PC-9 (cell line): ENCODE measurements at regions of chr5 and their contacts with region 1.

Region 1: DNA sequence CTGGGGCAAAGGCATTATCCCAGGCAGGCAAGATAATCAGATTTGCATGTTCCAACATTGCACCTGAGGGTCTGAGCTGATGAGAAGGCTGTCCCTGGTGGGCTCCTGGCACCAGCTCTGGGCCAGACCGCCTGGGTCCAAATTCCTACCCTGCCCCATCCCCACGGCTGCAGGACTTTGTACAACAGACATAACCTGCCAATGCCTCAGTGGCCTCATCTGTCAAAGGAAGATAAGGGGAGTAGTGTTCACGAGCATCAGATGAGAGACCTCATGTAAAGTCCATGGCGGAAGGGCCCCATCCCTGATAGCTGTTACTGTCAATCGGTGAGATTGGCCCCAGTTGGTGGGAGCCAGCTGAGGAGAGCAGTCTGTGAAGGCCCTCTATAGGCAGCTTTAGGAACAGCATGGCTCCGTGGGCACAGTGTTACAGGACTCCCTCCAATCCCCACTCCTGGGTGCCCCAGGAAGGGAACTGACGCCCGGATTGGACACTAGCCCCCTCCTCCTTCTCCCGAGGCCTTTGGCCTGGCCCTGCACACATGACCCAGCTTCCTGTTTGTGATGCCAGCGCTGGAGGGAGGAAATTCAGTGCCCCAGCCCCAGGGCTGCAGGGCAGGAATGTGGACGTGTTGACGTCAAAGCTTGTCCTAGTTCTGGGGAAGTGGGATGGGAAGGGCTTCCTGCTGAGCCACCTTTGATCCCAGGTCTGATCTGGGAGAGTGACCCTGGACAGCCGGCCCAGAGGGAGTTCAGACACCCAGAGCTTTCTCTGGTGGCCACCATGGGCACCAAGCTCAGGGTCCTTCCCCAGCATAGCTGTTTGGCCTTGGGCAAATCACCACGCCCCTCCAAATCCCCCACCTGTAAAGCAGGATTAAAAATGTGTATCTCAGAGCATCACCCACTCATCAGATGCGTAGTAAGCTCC is 56.2 kb downstream of the DUSP1 start:
- DNase-seq: peak; percentile 74 to 80
- H3K4me3 ChIP-seq: no peak overlapping the region
- H3K27ac ChIP-seq: 0 out of 2 replicates have a peak overlapping the region, but pooled peaks have one; percentile 18
- H3K4me1 ChIP-seq: peaks cover 14% of the 10 kb centered on the region
- H3K27me3 ChIP-seq: no peaks in the 10 kb centered on the region
- CTCF ChIP-seq: peak; percentile 88

Region 2: DNA sequence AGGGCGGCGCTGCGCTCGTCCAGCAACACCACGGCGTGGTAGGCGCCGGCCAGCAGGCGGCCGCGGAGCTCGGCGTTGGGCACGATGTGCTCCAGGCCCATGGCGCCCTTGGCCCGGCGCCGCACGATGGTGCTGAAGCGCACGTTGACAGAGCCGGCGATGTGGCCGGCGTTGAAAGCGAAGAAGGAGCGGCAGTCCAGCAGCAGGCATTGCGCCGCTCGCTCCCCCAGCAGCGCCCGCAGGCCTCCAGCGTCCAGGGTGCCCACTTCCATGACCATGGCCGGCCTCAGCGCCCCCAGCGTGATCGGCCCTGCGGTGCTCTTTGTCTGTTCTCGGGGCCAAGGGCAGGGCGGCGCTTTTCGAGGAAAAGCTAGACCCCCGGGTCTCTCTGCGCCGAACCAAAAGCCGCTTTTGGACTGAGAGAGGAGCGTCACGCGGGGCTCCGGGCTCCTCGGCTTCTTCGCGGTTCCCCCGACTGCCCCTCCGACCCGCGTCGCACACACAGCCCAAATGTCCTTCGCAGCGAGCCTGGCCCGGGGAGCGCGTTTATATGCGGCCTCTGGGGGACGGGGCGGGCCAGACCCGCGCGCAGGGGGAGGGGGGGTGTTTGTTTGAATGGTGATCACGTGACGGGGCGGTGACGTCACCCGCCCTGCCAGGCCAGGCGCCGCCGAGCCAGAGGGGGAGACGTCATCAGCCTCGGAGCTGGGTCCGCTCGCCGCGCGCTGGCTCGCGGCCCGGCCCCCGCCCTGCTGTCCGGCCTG is 56.1 kb after region 1 on chr5 and contains the start of gene DUSP1:
- CTCF ChIA-PET with region 1: interaction called, 6 read pairs
- POLR2A ChIA-PET with region 1: no interaction called
- intact Hi-C with region 1: loop called (anchors 1 kb)
- DNase-seq: peak; percentile 84 to 98
- H3K4me3 ChIP-seq: peak within 1 kb of the TSS; percentile 91
- H3K27ac ChIP-seq: peak within 1 kb of the TSS; percentile 93
- H3K4me1 ChIP-seq: peaks cover 61% of the 10 kb centered on the region
- H3K27me3 ChIP-seq: no peaks in the 10 kb centered on the region
- CTCF ChIP-seq: peak; percentile 50; the same call in 1 of the 2 replicates
- total RNA-seq, gene DUSP1: 10.3 and 18.4 TPM in 2 replicates

Region 3: DNA sequence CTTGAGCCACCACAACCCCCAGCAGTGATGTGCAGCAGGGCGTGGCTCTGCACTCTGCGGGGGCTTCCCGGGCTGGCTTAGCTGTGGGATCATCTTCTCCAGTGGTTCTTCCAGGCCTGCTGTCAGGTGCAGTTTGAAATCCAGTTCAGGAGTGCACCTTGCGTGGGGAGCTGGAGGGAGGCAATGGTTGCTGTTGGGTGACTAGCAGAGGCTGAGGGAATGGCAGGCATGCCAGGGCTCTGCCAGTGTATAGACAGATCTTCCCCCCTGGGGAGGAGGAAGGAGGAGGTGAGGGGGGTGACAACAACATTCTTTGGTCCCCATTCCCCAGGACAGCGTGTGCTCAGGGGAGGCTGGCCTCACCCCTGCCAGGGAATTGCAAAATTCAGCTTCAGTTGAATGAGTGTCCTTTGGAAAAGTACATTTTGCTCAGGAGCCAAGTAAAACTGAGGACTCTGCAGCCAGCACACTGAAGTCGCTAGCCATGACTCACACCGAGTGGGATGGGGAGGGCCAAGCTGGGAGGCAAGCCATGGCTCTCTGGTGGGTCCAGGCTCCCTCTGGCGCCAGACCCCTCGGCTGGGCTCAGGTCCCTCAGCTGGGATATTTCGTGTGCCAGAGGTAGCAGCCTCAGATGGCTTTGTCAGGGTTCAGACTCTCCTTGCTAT is 154.3 kb after region 1 on chr5:
- CTCF ChIA-PET with region 1: no interaction called
- POLR2A ChIA-PET with region 1: no interaction called
- intact Hi-C with region 1: loop called (anchors 2 kb)
- DNase-seq: peak; percentile 63 to 88
- H3K4me3 ChIP-seq: no peak overlapping the region
- H3K27ac ChIP-seq: peak overlapping the region; percentile 84
- H3K4me1 ChIP-seq: peaks cover 44% of the 10 kb centered on the region
- H3K27me3 ChIP-seq: no peaks in the 10 kb centered on the region
- CTCF ChIP-seq: no peak

Region 4: GRCh38 chr5:172941067-172941516 is 226.3 kb after region 1 on chr5:
- CTCF ChIA-PET with region 1: interaction called, 11 read pairs
- POLR2A ChIA-PET with region 1: no interaction called
- intact Hi-C with region 1: no loop called
- DNase-seq: no peak
- H3K4me3 ChIP-seq: no peak overlapping the region
- H3K27ac ChIP-seq: no peak overlapping the region
- H3K4me1 ChIP-seq: no peaks in the 10 kb centered on the region
- H3K27me3 ChIP-seq: no peaks in the 10 kb centered on the region
- CTCF ChIP-seq: no peak

Region 5: DNA sequence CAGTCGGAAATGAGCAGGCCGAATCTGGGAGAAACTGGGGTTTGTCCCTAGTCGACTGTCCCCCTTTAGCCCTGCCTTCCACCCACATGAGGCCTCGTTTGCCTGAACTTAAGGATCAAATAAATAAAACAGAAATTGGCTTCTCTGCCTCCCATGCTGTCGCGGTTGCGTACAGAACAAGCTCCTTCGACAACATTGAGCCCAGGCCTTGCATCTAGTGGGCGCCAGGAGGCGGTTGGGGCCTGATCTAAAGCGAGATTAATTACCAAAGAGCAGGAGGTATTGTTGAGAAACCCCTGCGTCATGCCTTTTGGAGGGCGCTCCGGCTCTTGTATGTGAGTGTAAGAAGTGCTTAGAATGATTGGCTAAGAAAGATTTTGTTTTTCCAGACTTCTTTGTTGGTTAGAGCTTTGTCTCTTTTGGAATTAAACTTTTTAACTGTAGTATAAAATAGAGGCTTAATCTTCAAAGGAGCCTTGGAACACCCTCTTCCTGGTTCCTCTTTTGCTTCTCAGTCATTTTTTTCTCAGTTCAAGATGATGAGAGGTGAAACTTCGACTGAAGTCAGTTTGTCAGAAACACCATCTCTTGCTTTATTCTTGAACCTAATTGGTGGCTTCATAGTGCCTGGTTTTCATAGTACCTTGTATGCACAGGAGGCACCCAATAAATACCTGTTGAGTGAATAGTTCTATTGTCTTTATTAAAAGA is 269.6 kb after region 1 on chr5:
- CTCF ChIA-PET with region 1: no interaction called
- POLR2A ChIA-PET with region 1: no interaction called
- intact Hi-C with region 1: loop called (anchors 5 kb)
- DNase-seq: peak; percentile 63 to 79
- H3K4me3 ChIP-seq: peak overlapping the region; percentile 87
- H3K27ac ChIP-seq: peak overlapping the region; percentile 77
- H3K4me1 ChIP-seq: peaks cover 13% of the 10 kb centered on the region; the same call in 1 of the 2 replicates
- H3K27me3 ChIP-seq: no peaks in the 10 kb centered on the region
- CTCF ChIP-seq: peak; percentile 65